ENCODE measurements at regions of chr14 and their contacts with region 1.

Region 1: GRCh38 chr14:50532502-50533240 is at the start of gene MAP4K5:
- DNase-seq: peak; percentile 98
- H3K4me3 ChIP-seq: peak within 1 kb of the TSS; percentile 94
- H3K27ac ChIP-seq: peak within 1 kb of the TSS; percentile 86
- H3K4me1 ChIP-seq: peaks cover 26% of the 10 kb centered on the region
- H3K27me3 ChIP-seq: no peaks in the 10 kb centered on the region
- total RNA-seq, gene MAP4K5: 166 and 194 TPM in 2 replicates

Region 2: GRCh38 chr14:49852301-49853157 is 680.1 kb before region 1 on chr14 and contains the start of gene NEMF:
- in situ Hi-C with region 1: loop called (anchors 25 kb)
- DNase-seq: peak; percentile 91
- H3K4me3 ChIP-seq: peak within 1 kb of the TSS; percentile 94
- H3K27ac ChIP-seq: peak within 1 kb of the TSS; percentile 60
- H3K4me1 ChIP-seq: peaks cover 16% of the 10 kb centered on the region
- H3K27me3 ChIP-seq: no peaks in the 10 kb centered on the region
- total RNA-seq, gene NEMF: 31.9 and 56.5 TPM in 2 replicates

Region 3: DNA sequence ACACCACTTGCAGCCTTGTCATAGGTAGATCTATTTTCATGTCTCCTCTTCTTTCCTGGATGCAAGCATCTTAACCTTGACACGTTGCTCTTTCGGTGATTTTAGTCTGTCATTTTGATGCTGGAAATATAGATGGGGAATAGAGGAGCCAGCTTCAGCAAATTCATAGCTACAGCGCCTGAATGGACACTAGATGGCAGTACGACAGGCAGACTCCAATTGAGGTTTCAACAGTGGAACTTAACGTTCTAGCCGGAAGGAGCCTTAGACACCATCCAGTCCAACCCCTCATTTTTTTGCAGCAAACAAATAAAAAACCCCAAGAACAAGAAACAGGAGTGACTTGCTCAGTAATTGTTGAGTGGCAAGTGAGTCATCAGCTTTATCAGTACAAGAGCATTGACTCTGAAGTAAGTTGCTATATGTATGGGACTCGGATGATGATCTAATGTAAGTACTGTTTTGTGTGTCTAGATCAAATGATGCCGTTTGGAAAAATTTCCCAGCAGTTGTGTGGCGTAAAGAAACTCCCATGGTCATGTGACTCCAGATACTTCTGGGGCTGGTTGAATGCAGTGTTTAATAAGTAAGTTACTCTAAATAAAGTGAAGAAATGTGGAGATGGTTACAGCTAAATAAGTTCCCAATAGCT is 211.5 kb before region 1 on chr14:
- in situ Hi-C with region 1: loop called (anchors 10 kb)
- DNase-seq: peak; percentile 93
- H3K4me3 ChIP-seq: peak overlapping the region; percentile 59
- H3K27ac ChIP-seq: peak overlapping the region; percentile 80
- H3K4me1 ChIP-seq: peaks cover 23% of the 10 kb centered on the region
- H3K27me3 ChIP-seq: no peaks in the 10 kb centered on the region

Region 4: DNA sequence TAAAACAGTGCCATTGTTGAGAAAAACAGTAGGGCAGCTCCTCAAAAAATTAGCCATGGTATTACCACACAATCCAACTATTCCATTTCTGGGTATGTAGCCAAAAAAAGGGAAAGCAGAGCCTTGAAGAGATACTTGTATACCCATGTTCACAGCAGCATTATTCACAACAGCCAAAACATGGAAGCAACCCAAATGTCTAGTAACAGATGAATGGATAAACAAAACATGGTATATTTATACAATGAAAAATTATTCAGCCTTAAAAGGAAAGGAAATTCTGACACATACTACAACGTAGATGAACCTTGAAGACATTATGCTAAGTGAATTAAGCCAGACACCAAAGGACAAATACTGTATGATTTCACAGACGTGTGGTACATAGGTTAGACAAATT is 1260.1 kb after region 1 on chr14:
- in situ Hi-C with region 1: no loop called
- DNase-seq: peak; percentile 50
- H3K4me3 ChIP-seq: no peak overlapping the region
- H3K27ac ChIP-seq: no peak overlapping the region
- H3K4me1 ChIP-seq: no peaks in the 10 kb centered on the region
- H3K27me3 ChIP-seq: 0 out of 2 replicates have a peak, but pooled peaks cover 3% of the 10 kb centered on the region

Measured in GM23248 (cell line).